ENCODE measurements at regions of chr15 and their contacts with region 1.

Region 1: GRCh38 chr15:85810075-85810474 is 15.3 kb upstream of the KLHL25 start:
- DNase-seq: no peak
- ATAC-seq: no peak
- H3K4me3 ChIP-seq: no peak overlapping the region
- H3K27ac ChIP-seq: no peak overlapping the region
- H3K4me1 ChIP-seq: peaks cover 0 to 2% (median 0%) of the 10 kb centered on the region in 12 donors
- H3K27me3 ChIP-seq: no peaks in the 10 kb centered on the region
- CTCF ChIP-seq: no peak
- POLR2A ChIP-seq: no peak

Region 2: GRCh38 chr15:85306946-85307708 is 502.9 kb before region 1 on chr15:
- intact Hi-C with region 1: loop called in 1 of 10 experiments (anchors 10 kb)
- DNase-seq: no peak
- ATAC-seq: no peak
- H3K4me3 ChIP-seq: no peak overlapping the region
- H3K27ac ChIP-seq: no peak overlapping the region
- H3K4me1 ChIP-seq: peaks cover 0 to under 1% (median 0%) of the 10 kb centered on the region in 12 donors
- H3K27me3 ChIP-seq: no peaks in the 10 kb centered on the region
- CTCF ChIP-seq: no peak
- POLR2A ChIP-seq: no peak

Region 3: DNA sequence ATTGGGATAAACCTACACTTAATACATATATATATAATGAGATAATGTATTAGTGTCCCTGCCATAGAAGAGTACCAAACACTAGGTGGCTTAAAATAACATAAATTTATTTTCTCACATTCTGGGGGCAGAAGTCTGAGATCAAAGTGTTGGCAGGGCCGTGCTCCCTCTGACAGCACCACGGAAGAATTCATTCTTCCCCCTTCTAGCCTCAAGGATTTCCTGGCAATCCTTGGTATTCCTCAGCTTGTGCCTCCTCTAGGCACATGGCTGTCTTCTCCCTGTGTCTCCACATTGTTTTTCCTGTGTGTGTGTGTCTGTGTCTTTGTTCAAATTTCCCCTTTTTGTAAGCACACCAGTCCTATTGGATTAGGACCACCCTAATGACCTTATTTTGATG is 154.4 kb after region 1 on chr15:
- intact Hi-C with region 1: no loop called
- DNase-seq: no peak
- ATAC-seq: no peak
- H3K4me3 ChIP-seq: no peak overlapping the region
- H3K27ac ChIP-seq: no peak overlapping the region
- H3K4me1 ChIP-seq: no peaks in the 10 kb centered on the region
- H3K27me3 ChIP-seq: peaks cover 0 to 5% (median 0%) of the 10 kb centered on the region in 9 donors
- CTCF ChIP-seq: no peak
- POLR2A ChIP-seq: no peak

Measured in heart left ventricle (tissue), 16 donors.